PC-9 (cell line): ENCODE measurements at regions of chr15 and their contacts with region 1.

Region 1: GRCh38 chr15:51888593-51889195 is 59.2 kb downstream of the TMOD3 start:
- DNase-seq: no peak
- H3K4me3 ChIP-seq: no peak overlapping the region
- H3K27ac ChIP-seq: peak overlapping the region; percentile 55
- H3K4me1 ChIP-seq: peaks cover 9% of the 10 kb centered on the region
- H3K27me3 ChIP-seq: no peaks in the 10 kb centered on the region
- CTCF ChIP-seq: peak; percentile 78

Region 2: GRCh38 chr15:51516291-51516690 is 372.4 kb before region 1 on chr15:
- CTCF ChIA-PET with region 1: no interaction called
- POLR2A ChIA-PET with region 1: interaction called, 19 read pairs
- intact Hi-C with region 1: no loop called
- DNase-seq: no peak
- H3K4me3 ChIP-seq: no peak overlapping the region
- H3K27ac ChIP-seq: no peak overlapping the region
- H3K4me1 ChIP-seq: no peaks in the 10 kb centered on the region
- H3K27me3 ChIP-seq: no peaks in the 10 kb centered on the region
- CTCF ChIP-seq: no peak

Region 3: GRCh38 chr15:51688863-51689262 is 199.8 kb before region 1 on chr15:
- CTCF ChIA-PET with region 1: no interaction called
- POLR2A ChIA-PET with region 1: no interaction called
- intact Hi-C with region 1: no loop called
- DNase-seq: no peak
- H3K4me3 ChIP-seq: no peak overlapping the region
- H3K27ac ChIP-seq: no peak overlapping the region
- H3K4me1 ChIP-seq: 0 out of 2 replicates have a peak, but pooled peaks cover 7% of the 10 kb centered on the region
- H3K27me3 ChIP-seq: peaks cover 6% of the 10 kb centered on the region; the same call in 1 of the 2 replicates
- CTCF ChIP-seq: no peak

Region 4: GRCh38 chr15:51971375-51972133 is 82.9 kb after region 1 on chr15 and contains the start of gene LEO1:
- CTCF ChIA-PET with region 1: interaction called, 22 read pairs
- POLR2A ChIA-PET with region 1: no interaction called
- intact Hi-C with region 1: no loop called
- DNase-seq: peak; percentile 82 to 86
- H3K4me3 ChIP-seq: peak within 1 kb of the TSS; percentile 71
- H3K27ac ChIP-seq: peak within 1 kb of the TSS; percentile 59
- H3K4me1 ChIP-seq: peaks cover 23% of the 10 kb centered on the region
- H3K27me3 ChIP-seq: no peaks in the 10 kb centered on the region
- CTCF ChIP-seq: no peak; the same call in 1 of the 2 replicates
- total RNA-seq, gene LEO1: 18.2 and 21.7 TPM in 2 replicates